Left ventricle myocardium inferior (tissue), 1 donor: ENCODE measurements at regions of chr4 and their contacts with region 1.

Region 1: GRCh38 chr4:153573881-153574802 is 108.0 kb downstream of the TMEM131L start:
- DNase-seq: peak; percentile 58
- H3K4me3 ChIP-seq: no peak overlapping the region
- H3K27ac ChIP-seq: peak overlapping the region; percentile 75
- H3K4me1 ChIP-seq: peaks cover 61% of the 10 kb centered on the region
- H3K27me3 ChIP-seq: no peaks in the 10 kb centered on the region
- CTCF ChIP-seq: peak; percentile 76

Region 2: GRCh38 chr4:153142700-153143438 is 431.3 kb before region 1 on chr4:
- intact Hi-C with region 1: loop called (anchors 10 kb)
- DNase-seq: peak; percentile 62
- H3K4me3 ChIP-seq: peak overlapping the region; percentile 38
- H3K27ac ChIP-seq: no peak overlapping the region
- H3K4me1 ChIP-seq: peaks cover 12% of the 10 kb centered on the region
- H3K27me3 ChIP-seq: peaks cover 3% of the 10 kb centered on the region
- CTCF ChIP-seq: peak; percentile 89

Region 3: DNA sequence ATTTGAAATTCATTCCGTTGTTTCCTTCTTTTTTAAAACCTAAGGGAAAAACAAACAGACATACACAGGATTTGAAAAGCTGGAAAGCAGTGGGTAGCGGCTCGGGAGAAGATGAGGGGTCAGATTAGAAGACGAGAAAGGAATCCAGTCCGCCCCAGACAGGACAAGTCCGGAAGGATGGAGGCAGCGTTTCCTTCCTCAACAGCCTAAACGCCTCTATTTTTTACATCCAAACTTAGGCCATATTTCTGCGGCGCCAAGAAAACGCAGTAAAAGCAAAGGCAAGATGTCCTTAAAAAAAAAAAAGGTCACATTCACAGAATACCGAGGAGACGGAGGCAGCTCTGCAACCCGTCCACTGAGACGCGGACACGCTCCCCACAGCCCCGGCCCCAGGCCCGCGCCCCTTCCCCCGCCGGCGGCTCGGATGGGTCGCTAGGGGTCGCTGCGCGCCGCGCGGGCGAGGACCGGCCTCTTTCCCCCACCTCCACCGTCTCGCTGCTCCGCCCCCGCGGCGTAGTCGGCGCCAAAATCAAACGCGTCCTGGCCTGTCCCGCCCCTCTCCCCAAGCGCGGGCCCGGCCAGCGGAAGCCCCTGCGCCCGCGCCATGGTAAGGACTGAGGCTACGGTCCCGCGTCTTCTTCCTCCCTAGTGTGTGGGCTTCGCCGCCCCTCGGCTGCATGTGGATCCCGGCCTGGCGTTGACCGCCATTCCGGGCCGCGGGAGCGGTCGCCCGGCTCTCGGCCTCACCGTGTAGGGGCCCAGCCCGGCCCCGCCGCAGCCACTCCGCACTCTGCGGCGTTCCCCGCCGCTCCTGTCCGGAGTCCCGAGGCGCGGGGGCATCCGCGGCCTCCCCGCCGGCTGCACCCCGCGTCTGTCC is 229.8 kb before region 1 on chr4 and contains the start of gene MND1:
- intact Hi-C with region 1: loop called (anchors 5 kb)
- DNase-seq: peak; percentile 82
- H3K4me3 ChIP-seq: peak within 1 kb of the TSS; percentile 81
- H3K27ac ChIP-seq: no peak within 1 kb of the TSS
- H3K4me1 ChIP-seq: peaks cover 23% of the 10 kb centered on the region
- H3K27me3 ChIP-seq: no peaks in the 10 kb centered on the region
- CTCF ChIP-seq: peak; percentile 98
- total RNA-seq, gene MND1: 0.38 TPM

Region 4: DNA sequence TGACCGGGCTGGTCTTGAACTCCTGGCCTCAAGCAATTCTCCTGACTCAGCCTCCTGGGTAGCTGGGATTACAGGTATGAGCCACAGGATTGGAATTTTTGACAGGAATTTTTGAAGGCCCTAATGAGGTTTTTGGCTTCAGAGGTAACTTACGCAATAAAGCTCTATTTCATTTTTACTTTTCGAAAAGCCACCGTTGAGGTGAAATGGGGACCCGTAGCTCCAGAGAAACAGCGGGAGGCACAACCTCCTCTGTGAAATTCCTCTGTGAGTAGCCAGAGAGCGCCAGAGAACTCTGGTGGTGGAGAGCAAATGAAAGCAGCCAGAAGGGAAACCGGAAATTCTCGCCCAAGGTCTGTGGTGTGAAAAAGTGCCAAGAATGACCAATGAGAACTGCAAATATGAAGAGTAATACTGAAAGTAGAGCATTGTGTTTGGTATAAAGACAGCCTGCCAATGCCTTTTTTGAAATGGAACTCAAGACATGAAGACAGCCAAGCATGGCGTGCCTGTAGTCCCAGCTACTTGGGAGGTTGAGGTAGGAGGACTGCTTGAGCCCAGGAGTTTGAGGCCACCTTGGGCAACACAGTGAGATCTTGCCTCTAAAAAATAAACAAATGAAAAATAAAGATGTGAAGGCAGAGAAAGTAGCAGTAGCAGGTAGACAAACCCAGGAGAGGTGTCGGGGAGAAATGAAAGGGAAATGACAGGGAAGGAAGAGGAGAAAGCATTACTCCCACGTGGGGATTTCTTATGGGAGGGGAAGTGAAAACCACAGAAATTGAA is 141.0 kb before region 1 on chr4:
- intact Hi-C with region 1: loop called (anchors 5 kb)
- DNase-seq: peak; percentile 26
- H3K4me3 ChIP-seq: no peak overlapping the region
- H3K27ac ChIP-seq: peak overlapping the region; percentile 9
- H3K4me1 ChIP-seq: no peaks in the 10 kb centered on the region
- H3K27me3 ChIP-seq: no peaks in the 10 kb centered on the region
- CTCF ChIP-seq: peak; percentile 80

Region 5: GRCh38 chr4:153451911-153452657 is 122.1 kb before region 1 on chr4:
- intact Hi-C with region 1: no loop called
- DNase-seq: no peak
- H3K4me3 ChIP-seq: no peak overlapping the region
- H3K27ac ChIP-seq: no peak overlapping the region
- H3K4me1 ChIP-seq: peaks cover 19% of the 10 kb centered on the region
- H3K27me3 ChIP-seq: no peaks in the 10 kb centered on the region
- CTCF ChIP-seq: no peak

Region 6: GRCh38 chr4:153466081-153466948 is 107.8 kb before region 1 on chr4 and contains the start of gene TMEM131L:
- intact Hi-C with region 1: loop called (anchors 10 kb)
- DNase-seq: peak; percentile 71
- H3K4me3 ChIP-seq: peak within 1 kb of the TSS; percentile 93
- H3K27ac ChIP-seq: peak within 1 kb of the TSS; percentile 90
- H3K4me1 ChIP-seq: peaks cover 58% of the 10 kb centered on the region
- H3K27me3 ChIP-seq: no peaks in the 10 kb centered on the region
- CTCF ChIP-seq: peak; percentile 33
- total RNA-seq, gene TMEM131L: 14.9 TPM